MCF 10A (cell line): ENCODE measurements at regions of chr2 and their contacts with region 1.

Region 1: DNA sequence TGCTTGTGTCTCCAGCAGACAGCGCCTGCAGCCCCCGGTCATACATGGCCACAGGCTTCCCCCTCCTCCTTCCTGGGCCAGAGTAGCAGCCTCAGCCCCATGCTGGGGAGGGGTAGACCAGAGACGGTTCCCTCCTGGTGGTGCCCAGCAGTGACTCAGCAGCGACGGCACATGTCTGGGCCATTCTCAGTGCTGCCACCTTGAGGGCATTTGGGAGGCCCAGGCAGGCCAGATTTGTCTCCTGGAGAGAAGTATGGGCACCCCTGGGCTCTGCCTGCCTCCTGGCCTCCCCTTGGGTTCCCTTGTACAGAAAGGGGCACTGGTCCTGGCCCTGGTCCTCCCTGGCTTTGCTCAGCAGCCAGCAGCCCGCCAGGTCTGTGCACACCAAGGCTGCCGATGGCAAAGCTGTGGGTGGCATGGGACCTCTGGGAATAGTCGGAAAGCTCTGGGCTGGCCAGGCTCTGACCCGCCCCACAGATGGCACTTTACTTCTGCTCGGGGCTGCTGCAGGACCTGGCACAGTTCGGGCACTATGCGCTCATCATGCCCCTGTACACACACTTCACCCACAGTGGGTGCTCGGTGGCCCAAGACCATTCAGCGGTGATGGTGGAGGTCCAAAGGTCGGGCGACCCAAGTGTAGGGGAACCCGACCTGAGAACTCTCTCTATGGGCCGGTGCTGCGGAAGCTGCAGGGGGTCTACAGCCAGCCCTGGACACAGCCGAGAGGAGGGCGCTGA is 11.4 kb upstream of the ALPI start:
- DNase-seq: peak; percentile 79
- H3K4me3 Mint-ChIP-seq: no peak overlapping the region
- H3K27ac Mint-ChIP-seq: no peak overlapping the region
- H3K4me1 Mint-ChIP-seq: no peaks in the 10 kb centered on the region
- H3K27me3 Mint-ChIP-seq: no peaks in the 10 kb centered on the region
- CTCF ChIP-seq: peak; percentile 63

Region 2: DNA sequence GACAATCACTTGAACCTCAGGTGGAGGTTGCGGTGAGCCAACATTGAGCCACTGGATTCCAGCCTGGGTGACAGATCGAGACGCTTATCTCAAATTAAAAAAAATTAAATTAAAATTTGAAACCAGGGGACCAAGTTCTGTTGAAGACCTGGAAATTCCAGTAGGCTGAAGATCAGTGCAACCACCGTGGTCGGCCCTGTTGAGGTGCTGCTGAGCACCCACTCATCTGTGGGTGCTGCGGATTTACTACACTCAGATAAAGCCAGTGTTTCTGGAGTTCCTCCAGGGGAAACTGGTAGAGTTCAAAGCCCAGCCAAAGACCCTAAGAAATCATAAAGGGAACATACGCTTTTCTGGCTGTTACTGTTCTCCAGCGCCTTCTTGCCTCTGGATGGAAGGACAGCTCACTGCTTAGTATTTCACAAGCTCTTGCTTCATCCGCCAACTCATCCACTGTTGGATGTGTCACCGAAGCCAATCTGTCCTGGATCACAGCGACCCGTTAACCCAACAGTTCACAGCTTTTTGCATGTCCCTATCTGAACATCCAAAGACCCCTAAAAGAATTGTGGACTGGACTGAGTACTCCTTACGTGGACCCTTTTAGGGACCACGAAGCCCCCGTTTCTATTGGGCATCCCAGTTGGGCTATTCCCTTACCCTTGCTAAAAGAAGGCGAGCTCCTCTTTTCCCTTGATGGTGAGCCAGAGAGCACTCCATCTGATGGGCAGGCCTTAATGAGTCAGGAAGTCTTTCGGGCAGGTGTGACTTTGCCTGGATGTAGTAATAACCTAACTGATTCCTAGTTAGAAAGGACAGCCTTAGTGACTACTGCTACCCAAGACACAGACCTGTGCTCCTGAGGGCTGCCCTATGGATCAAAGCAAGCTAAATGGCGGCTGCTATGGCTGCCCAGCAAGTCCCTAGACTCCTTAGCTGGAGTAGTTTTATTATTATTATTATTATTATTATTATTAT is 72.1 kb before region 1 on chr2:
- CTCF ChIA-PET with region 1: interaction called, 3 read pairs
- POLR2A ChIA-PET with region 1: no interaction called
- intact Hi-C with region 1: loop called (anchors 5 kb)
- DNase-seq: peak; percentile 81
- H3K4me3 Mint-ChIP-seq: no peak overlapping the region
- H3K27ac Mint-ChIP-seq: no peak overlapping the region
- H3K4me1 Mint-ChIP-seq: peaks cover 6% of the 10 kb centered on the region
- H3K27me3 Mint-ChIP-seq: no peaks in the 10 kb centered on the region
- CTCF ChIP-seq: no peak

Region 3: GRCh38 chr2:232411901-232412629 is 32.5 kb before region 1 on chr2:
- CTCF ChIA-PET with region 1: no interaction called
- POLR2A ChIA-PET with region 1: no interaction called
- intact Hi-C with region 1: no loop called
- DNase-seq: no peak
- H3K4me3 Mint-ChIP-seq: no peak overlapping the region
- H3K27ac Mint-ChIP-seq: no peak overlapping the region
- H3K4me1 Mint-ChIP-seq: no peaks in the 10 kb centered on the region
- H3K27me3 Mint-ChIP-seq: peaks cover 40% of the 10 kb centered on the region
- CTCF ChIP-seq: no peak

Region 4: GRCh38 chr2:232521959-232522622 is 77.5 kb after region 1 on chr2:
- CTCF ChIA-PET with region 1: interaction called, 17 read pairs
- POLR2A ChIA-PET with region 1: no interaction called
- intact Hi-C with region 1: loop called (anchors 1 kb)
- DNase-seq: peak; percentile 38
- H3K4me3 Mint-ChIP-seq: no peak overlapping the region
- H3K27ac Mint-ChIP-seq: no peak overlapping the region
- H3K4me1 Mint-ChIP-seq: no peaks in the 10 kb centered on the region
- H3K27me3 Mint-ChIP-seq: peaks cover 11% of the 10 kb centered on the region
- CTCF ChIP-seq: peak; percentile 90